ENCODE measurements at regions of chr20 and their contacts with region 1.

Region 1: GRCh38 chr20:36613974-36614373 is 8.4 kb downstream of the RAB5IF start:
- DNase-seq: no peak
- ATAC-seq: no peak
- H3K4me3 ChIP-seq: no peak overlapping the region
- H3K27ac ChIP-seq: no peak overlapping the region
- H3K4me1 ChIP-seq: no peaks in the 10 kb centered on the region
- H3K27me3 ChIP-seq: no peaks in the 10 kb centered on the region
- CTCF ChIP-seq: no peak

Region 2: GRCh38 chr20:36754656-36755222 is 140.8 kb after region 1 on chr20:
- CTCF ChIA-PET with region 1: interaction called, 4 read pairs
- POLR2A ChIA-PET with region 1: no interaction called
- in situ Hi-C with region 1: no loop called
- intact Hi-C with region 1: loop called (anchors 5 kb)
- DNase-seq: peak; percentile 78
- ATAC-seq: peak; percentile 92
- H3K4me3 ChIP-seq: no peak overlapping the region
- H3K27ac ChIP-seq: no peak overlapping the region
- H3K4me1 ChIP-seq: no peaks in the 10 kb centered on the region
- H3K27me3 ChIP-seq: no peaks in the 10 kb centered on the region
- CTCF ChIP-seq: peak; percentile 84

Region 3: DNA sequence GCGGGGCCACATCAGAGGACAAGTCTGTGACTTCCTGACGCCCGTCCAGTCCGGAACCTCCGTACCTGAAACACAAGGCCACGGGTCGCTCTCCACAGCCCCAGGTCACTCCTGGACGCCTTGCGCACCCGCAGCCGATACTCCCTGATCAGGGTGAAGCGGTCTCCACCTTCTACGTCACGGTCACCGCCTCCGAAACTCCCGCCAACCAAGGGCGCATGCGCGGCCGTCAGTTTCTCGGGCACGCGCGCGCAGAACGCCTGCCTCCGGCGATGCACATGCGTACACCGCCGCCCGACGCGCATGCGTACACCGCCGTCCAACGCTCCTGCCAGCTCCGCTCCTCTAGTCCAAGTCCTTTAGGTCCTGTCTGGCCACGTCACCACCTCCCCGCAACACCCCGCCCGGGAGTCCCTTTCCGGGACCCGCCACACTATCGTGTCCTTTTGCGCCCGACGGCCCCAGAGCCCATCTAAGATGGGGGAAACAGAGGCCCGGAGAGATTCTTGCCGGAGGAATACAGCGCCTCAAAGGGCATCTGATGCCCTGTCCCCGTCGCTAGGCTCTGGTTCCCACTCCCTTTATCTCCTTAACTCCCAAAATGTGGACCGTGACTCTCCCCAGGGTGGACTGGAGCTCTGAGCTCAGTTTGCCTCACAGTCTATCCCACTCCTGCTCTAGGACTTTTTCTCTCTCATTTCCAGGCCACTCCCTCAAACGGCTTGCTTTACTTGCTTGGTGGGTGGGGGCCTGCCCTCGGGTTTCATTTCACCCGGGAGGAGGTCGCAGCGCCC is 159.8 kb after region 1 on chr20 and contains the start of gene DSN1:
- CTCF ChIA-PET with region 1: no interaction called
- POLR2A ChIA-PET with region 1: interaction called, 17 read pairs
- in situ Hi-C with region 1: no loop called
- intact Hi-C with region 1: no loop called
- DNase-seq: peak; percentile 89
- ATAC-seq: peak; percentile 94
- H3K4me3 ChIP-seq: peak within 1 kb of the TSS; percentile 77 to 82
- H3K27ac ChIP-seq: peak within 1 kb of the TSS; percentile 92
- H3K4me1 ChIP-seq: peaks cover 12% of the 10 kb centered on the region; the same call in 1 of the 2 replicates
- H3K27me3 ChIP-seq: no peaks in the 10 kb centered on the region
- CTCF ChIP-seq: no peak
- total RNA-seq, gene DSN1: 27.2 TPM

Region 4: DNA sequence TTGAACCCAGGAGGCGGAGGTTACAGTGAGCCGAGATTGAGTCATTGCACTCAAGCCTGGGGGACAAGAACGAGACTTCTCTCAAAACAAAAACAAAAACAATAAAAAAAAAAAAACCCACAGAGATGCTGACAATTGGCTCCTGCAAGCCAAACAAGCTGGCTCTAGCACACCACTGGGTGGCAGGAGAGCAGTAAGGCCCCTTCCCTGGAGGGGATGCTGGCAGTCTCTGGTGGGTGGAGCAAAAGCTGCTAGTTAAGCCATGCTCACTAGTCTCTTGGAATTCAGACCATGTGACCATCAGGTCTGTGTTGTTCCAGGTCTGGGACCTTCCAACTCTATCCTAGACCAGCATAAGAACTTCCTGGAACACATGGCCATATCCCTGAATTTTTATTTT is 178.4 kb after region 1 on chr20:
- CTCF ChIA-PET with region 1: no interaction called
- POLR2A ChIA-PET with region 1: no interaction called
- in situ Hi-C with region 1: no loop called
- intact Hi-C with region 1: no loop called
- DNase-seq: no peak
- ATAC-seq: peak; percentile 82
- H3K4me3 ChIP-seq: no peak overlapping the region
- H3K27ac ChIP-seq: no peak overlapping the region
- H3K4me1 ChIP-seq: no peaks in the 10 kb centered on the region
- H3K27me3 ChIP-seq: no peaks in the 10 kb centered on the region
- CTCF ChIP-seq: no peak

Region 5: GRCh38 chr20:36881888-36882287 is 267.9 kb after region 1 on chr20:
- CTCF ChIA-PET with region 1: no interaction called
- POLR2A ChIA-PET with region 1: interaction called, 14 read pairs
- in situ Hi-C with region 1: no loop called
- intact Hi-C with region 1: no loop called
- DNase-seq: no peak
- ATAC-seq: no peak
- H3K4me3 ChIP-seq: no peak overlapping the region
- H3K27ac ChIP-seq: no peak overlapping the region
- H3K4me1 ChIP-seq: no peaks in the 10 kb centered on the region
- H3K27me3 ChIP-seq: no peaks in the 10 kb centered on the region
- CTCF ChIP-seq: no peak

Measured in Panc1 (cell line).